Activated naive CD4-positive, alpha-beta T cell treated with anti-CD3 and anti-CD28 coated beads for 36 hours (primary cell): ENCODE measurements at regions of chr1 and their contacts with region 1.

Region 1: GRCh38 chr1:93846211-93846991 is 32.6 kb downstream of the DNTTIP2 start:
- DNase-seq: peak; percentile 75
- H3K4me3 Mint-ChIP-seq: peak overlapping the region; percentile 87
- H3K27ac Mint-ChIP-seq: peak overlapping the region; percentile 92
- H3K4me1 Mint-ChIP-seq: peaks cover 21% of the 10 kb centered on the region
- H3K27me3 Mint-ChIP-seq: no peaks in the 10 kb centered on the region

Region 2: DNA sequence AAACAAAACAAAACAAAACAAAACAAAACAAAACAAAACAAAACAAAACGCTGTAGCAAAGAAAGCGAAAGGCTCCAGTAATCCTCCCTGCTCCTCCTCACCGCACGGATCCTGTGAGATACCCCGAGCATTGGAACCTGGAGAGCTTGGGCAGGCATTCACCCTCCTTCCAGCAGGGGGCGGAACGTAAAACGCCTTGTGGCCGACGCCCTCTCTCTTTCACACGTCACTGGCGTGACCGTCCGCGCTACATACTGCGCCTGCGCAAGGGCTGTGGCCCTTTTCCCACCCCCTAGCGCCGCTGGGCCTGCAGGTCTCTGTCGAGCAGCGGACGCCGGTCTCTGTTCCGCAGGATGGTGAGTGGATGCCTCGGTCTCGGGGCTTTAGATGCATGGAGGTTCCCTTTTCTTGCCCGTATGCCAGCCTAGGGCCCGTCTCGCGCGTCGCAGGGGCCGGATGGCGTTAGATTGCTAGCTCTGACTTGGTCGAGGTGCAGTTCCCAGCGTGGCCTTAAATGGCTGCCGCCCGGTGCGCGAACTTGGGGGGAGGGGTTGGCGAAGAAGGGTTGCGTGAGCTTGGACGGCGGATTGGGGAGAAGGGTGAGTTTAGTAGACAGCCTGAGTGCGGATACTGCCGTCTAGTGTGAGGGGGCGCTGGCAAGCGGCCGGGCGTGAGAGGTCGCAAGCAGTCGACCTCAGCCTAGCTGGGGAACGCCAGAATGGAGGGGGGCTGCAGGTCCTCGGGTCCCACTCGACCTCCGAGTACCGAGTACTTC is 1014.5 kb before region 1 on chr1 and contains the start of gene RPL5:
- CTCF ChIA-PET with region 1: no interaction called
- intact Hi-C with region 1: loop called (anchors 1 kb)
- DNase-seq: peak; percentile 98
- H3K4me3 Mint-ChIP-seq: peak within 1 kb of the TSS; percentile 98
- H3K27ac Mint-ChIP-seq: peak within 1 kb of the TSS; percentile 99
- H3K4me1 Mint-ChIP-seq: peaks cover 38% of the 10 kb centered on the region
- H3K27me3 Mint-ChIP-seq: no peaks in the 10 kb centered on the region
- total RNA-seq, gene RPL5: 1,793 to 1,819 TPM

Region 3: GRCh38 chr1:93078986-93079654 is 767.3 kb before region 1 on chr1 and contains the start of gene MTF2:
- CTCF ChIA-PET with region 1: interaction called, 3 read pairs
- intact Hi-C with region 1: loop called (anchors 1 kb)
- DNase-seq: peak; percentile 96
- H3K4me3 Mint-ChIP-seq: peak within 1 kb of the TSS; percentile 94
- H3K27ac Mint-ChIP-seq: peak within 1 kb of the TSS; percentile 94
- H3K4me1 Mint-ChIP-seq: peaks cover 29% of the 10 kb centered on the region
- H3K27me3 Mint-ChIP-seq: no peaks in the 10 kb centered on the region
- total RNA-seq, gene MTF2: 51.0 to 56.6 TPM

Region 4: DNA sequence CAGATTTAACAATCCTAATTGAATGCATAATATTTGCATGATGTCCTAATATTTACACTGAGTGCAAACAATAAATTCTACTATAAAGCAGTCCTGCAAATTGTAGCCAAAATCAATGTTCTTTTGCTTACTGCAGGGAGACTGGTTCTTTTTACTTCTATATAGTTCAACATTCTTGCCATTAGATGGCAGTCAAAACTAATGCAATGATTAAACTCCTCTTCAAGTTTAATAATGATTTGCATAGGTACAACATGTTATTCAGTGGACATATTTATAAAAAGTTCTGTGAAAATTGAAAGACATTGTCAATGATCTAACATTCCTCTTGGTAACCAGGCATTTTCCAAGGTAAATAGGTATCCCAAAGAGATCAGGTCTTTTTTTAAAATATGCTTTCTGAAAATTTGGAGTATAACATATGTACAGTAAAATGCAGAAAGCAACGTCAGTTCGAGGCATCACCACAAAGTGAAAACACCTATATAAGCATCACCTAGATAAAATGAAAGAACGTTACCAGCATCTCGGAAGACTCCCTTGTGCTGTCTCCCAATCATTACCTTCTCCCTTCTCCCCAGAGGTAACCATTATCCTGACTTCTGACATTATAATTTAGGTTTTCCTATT is 408.3 kb before region 1 on chr1:
- CTCF ChIA-PET with region 1: interaction called, 5 read pairs
- intact Hi-C with region 1: loop called (anchors 1 kb)
- DNase-seq: no peak
- H3K4me3 Mint-ChIP-seq: no peak overlapping the region
- H3K27ac Mint-ChIP-seq: no peak overlapping the region
- H3K4me1 Mint-ChIP-seq: no peaks in the 10 kb centered on the region
- H3K27me3 Mint-ChIP-seq: peaks cover 4% of the 10 kb centered on the region

Region 5: GRCh38 chr1:93502561-93502960 is 343.8 kb before region 1 on chr1:
- CTCF ChIA-PET with region 1: no interaction called
- intact Hi-C with region 1: no loop called
- DNase-seq: no peak
- H3K4me3 Mint-ChIP-seq: no peak overlapping the region
- H3K27ac Mint-ChIP-seq: no peak overlapping the region
- H3K4me1 Mint-ChIP-seq: no peaks in the 10 kb centered on the region
- H3K27me3 Mint-ChIP-seq: no peaks in the 10 kb centered on the region

Region 6: GRCh38 chr1:93692983-93693591 is 153.3 kb before region 1 on chr1:
- CTCF ChIA-PET with region 1: interaction called, 6 read pairs
- intact Hi-C with region 1: loop called (anchors 1 kb)
- DNase-seq: peak; percentile 77
- H3K4me3 Mint-ChIP-seq: no peak overlapping the region
- H3K27ac Mint-ChIP-seq: peak overlapping the region; percentile 57
- H3K4me1 Mint-ChIP-seq: peaks cover 15% of the 10 kb centered on the region
- H3K27me3 Mint-ChIP-seq: peaks cover 11% of the 10 kb centered on the region

Region 7: DNA sequence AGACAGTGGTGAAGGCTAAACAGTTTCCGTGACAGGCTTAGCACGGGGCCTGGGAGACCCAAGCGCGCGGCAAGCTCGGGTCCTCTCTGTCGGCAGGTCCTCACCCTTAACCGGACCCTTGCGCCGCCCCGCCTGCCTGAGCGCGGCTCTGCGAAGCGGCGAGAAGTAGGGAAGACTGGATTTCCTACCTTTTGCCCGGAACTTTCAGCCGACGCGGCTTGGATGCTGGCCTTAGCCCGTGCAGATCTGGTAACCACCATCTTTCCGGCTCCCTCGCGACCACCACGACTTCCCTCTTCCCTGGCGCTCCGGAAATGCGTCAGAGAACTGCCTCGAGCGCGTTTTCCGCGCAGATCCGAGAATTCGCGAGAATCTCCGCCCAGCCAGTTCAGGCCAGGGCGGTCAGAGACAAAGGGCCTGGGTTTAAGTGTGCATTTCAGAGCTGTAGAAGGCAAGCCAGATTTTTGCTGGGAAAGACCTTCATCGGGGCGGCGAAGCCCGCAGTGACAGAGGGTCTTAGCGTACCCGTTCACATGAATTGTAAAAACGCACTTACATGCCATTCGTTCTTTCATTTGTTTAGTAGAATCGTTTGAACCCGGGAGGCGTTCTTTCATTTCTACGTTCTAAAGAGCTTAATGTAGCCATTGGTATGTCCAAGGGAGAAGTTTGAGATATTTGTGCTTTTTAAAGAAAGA is 32.6 kb after region 1 on chr1 and contains the start of gene DNTTIP2:
- CTCF ChIA-PET with region 1: no interaction called
- intact Hi-C with region 1: loop called (anchors 1 kb)
- DNase-seq: peak; percentile 95
- H3K4me3 Mint-ChIP-seq: peak within 1 kb of the TSS; percentile 92
- H3K27ac Mint-ChIP-seq: peak within 1 kb of the TSS; percentile 97
- H3K4me1 Mint-ChIP-seq: peaks cover 42% of the 10 kb centered on the region
- H3K27me3 Mint-ChIP-seq: no peaks in the 10 kb centered on the region
- total RNA-seq, gene DNTTIP2: 58.5 to 64.5 TPM

Region 8: GRCh38 chr1:93919780-93920179 is 73.4 kb after region 1 on chr1:
- CTCF ChIA-PET with region 1: no interaction called
- intact Hi-C with region 1: no loop called
- DNase-seq: no peak
- H3K4me3 Mint-ChIP-seq: no peak overlapping the region
- H3K27ac Mint-ChIP-seq: no peak overlapping the region
- H3K4me1 Mint-ChIP-seq: no peaks in the 10 kb centered on the region
- H3K27me3 Mint-ChIP-seq: peaks cover under 1% of the 10 kb centered on the region

Region 9: GRCh38 chr1:94012686-94013624 is 166.6 kb after region 1 on chr1:
- CTCF ChIA-PET with region 1: no interaction called
- intact Hi-C with region 1: no loop called
- DNase-seq: no peak
- H3K4me3 Mint-ChIP-seq: no peak overlapping the region
- H3K27ac Mint-ChIP-seq: no peak overlapping the region
- H3K4me1 Mint-ChIP-seq: peaks cover 6% of the 10 kb centered on the region
- H3K27me3 Mint-ChIP-seq: peaks cover 3% of the 10 kb centered on the region

Region 10: GRCh38 chr1:94383966-94384408 is 537.6 kb after region 1 on chr1:
- CTCF ChIA-PET with region 1: no interaction called
- intact Hi-C with region 1: loop called (anchors 2 kb)
- DNase-seq: peak; percentile 48
- H3K4me3 Mint-ChIP-seq: peak overlapping the region; percentile 5
- H3K27ac Mint-ChIP-seq: peak overlapping the region; percentile 85
- H3K4me1 Mint-ChIP-seq: peaks cover 32% of the 10 kb centered on the region
- H3K27me3 Mint-ChIP-seq: peaks cover 4% of the 10 kb centered on the region